T-cell (primary cell): ENCODE measurements at regions of chrX and their contacts with region 1.

Region 1: GRCh38 chrX:15854712-15855567 is at the start of gene AP1S2:
- DNase-seq: peak; percentile 85 to 98 (median 93)
- ATAC-seq: peak; percentile 93 to 96 (median 94)
- H3K4me3 ChIP-seq: peak within 1 kb of the TSS; percentile 72 to 79
- H3K4me3 Mint-ChIP-seq: peak within 1 kb of the TSS; percentile 91 to 98 (median 93)
- H3K27ac ChIP-seq: peak within 1 kb of the TSS; percentile 83
- H3K27ac Mint-ChIP-seq: peak within 1 kb of the TSS; percentile 97
- H3K4me1 ChIP-seq: peaks cover 9 to 10% of the 10 kb centered on the region in 2 experiments
- H3K4me1 Mint-ChIP-seq: peaks cover 20 to 35% (median 28%) of the 10 kb centered on the region in 3 donors
- H3K27me3 ChIP-seq: no peaks in the 10 kb centered on the region
- H3K27me3 Mint-ChIP-seq: no peaks in the 10 kb centered on the region
- total RNA-seq, gene AP1S2: 19.1 to 29.5 (median 25.3) TPM

Region 2: GRCh38 chrX:15789979-15790768 is 64.8 kb before region 1 on chrX and contains the start of gene ZRSR2:
- CTCF ChIA-PET with region 1: interaction called in 1 of 2 experiments, 6 read pairs
- POLR2A ChIA-PET with region 1: interaction called, 3 to 17 read pairs
- DNase-seq: peak; percentile 79 to 95 (median 87)
- ATAC-seq: peak; percentile 90 to 97 (median 92)
- H3K4me3 ChIP-seq: peak within 1 kb of the TSS; percentile 66 to 85
- H3K4me3 Mint-ChIP-seq: no peak within 1 kb of the TSS
- H3K27ac ChIP-seq: peak within 1 kb of the TSS; percentile 92
- H3K27ac Mint-ChIP-seq: no peak within 1 kb of the TSS
- H3K4me1 ChIP-seq: peaks cover 9 to 22% of the 10 kb centered on the region in 2 experiments
- H3K4me1 Mint-ChIP-seq: peaks cover 25 to 34% (median 30%) of the 10 kb centered on the region in 3 donors
- H3K27me3 ChIP-seq: no peaks in the 10 kb centered on the region
- H3K27me3 Mint-ChIP-seq: no peaks in the 10 kb centered on the region
- total RNA-seq, gene ZRSR2: 18.5 to 35.4 (median 21.6) TPM

Region 3: DNA sequence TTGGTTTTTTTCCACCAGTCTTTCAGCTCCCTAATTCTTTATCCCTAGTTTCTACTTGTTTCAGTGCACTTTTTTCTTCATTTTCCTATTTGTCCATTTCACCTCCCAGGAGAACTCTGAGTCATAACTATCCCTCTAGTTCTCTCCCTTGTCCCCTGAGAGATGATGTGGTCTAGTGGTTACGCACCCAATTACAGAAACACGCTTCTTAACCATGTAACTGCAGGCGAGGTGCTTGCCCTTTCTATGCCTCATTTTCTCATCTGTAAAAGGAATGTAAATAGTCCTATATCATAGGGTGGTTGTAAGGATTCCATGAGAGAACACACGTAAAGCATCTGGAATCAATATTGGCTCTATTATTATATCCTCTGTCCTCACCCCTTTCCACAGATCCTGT is 259.7 kb after region 1 on chrX:
- CTCF ChIA-PET with region 1: no interaction called
- POLR2A ChIA-PET with region 1: no interaction called
- DNase-seq: no peak
- ATAC-seq: no peak
- H3K4me3 ChIP-seq: no peak overlapping the region
- H3K4me3 Mint-ChIP-seq: no peak overlapping the region
- H3K27ac ChIP-seq: no peak overlapping the region
- H3K27ac Mint-ChIP-seq: no peak overlapping the region
- H3K4me1 ChIP-seq: no peaks in the 10 kb centered on the region
- H3K4me1 Mint-ChIP-seq: peaks cover 0 to 5% (median 0%) of the 10 kb centered on the region in 3 donors
- H3K27me3 ChIP-seq: no peaks in the 10 kb centered on the region
- H3K27me3 Mint-ChIP-seq: peaks cover 0 to 16% of the 10 kb centered on the region in 2 donors